AG04450 (cell line): ENCODE measurements at regions of chr20 and their contacts with region 1.

Region 1: DNA sequence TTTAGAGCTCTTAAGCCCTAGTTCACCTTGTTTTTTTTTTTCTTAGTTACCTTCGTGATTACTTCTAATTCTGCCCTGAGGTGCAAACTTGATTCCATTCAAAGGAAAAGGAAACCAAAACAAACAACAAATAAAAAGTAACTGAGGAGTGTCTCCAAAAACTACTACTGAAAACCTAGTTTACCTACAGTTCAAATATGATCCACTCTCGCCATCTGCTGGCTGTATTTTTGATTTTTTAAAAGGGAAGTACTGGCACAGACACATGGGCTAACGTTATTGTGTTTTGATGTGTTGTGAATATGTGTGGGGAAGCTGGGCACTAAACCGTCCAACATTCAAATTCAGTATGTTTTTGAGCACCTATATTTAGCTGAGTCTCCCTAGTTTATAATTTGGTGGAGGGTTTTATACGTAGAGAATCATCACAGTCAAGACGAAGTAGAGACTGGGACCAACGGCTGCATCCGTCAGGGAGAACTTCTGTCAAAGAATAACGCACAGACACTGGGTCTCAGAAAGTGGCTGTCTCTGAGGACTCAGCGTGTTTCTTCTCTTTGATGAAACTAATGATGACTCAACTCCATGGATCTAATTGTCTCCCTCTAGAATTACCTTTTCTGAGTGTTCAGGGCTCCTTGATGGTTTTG is 373.5 kb upstream of the BTBD3 start:
- DNase-seq: peak; percentile 37
- H3K4me3 ChIP-seq: peak overlapping the region; percentile 17
- H3K27ac ChIP-seq: no peak overlapping the region
- H3K27me3 ChIP-seq: no peaks in the 10 kb centered on the region
- CTCF ChIP-seq: peak; percentile 63

Region 2: GRCh38 chr20:11267131-11267761 is 276.9 kb before region 1 on chr20:
- CTCF ChIA-PET with region 1: interaction called, 12 read pairs
- POLR2A ChIA-PET with region 1: no interaction called
- DNase-seq: peak; percentile 93
- H3K4me3 ChIP-seq: no peak overlapping the region
- H3K27ac ChIP-seq: peak overlapping the region; percentile 77
- H3K27me3 ChIP-seq: no peaks in the 10 kb centered on the region
- CTCF ChIP-seq: peak; percentile 50

Region 3: GRCh38 chr20:12287575-12287974 is 743.4 kb after region 1 on chr20:
- CTCF ChIA-PET with region 1: no interaction called
- POLR2A ChIA-PET with region 1: no interaction called
- DNase-seq: no peak
- H3K4me3 ChIP-seq: no peak overlapping the region
- H3K27ac ChIP-seq: no peak overlapping the region
- H3K27me3 ChIP-seq: no peaks in the 10 kb centered on the region
- CTCF ChIP-seq: no peak